Activated CD4-positive, alpha-beta T cell treated with anti-CD3 and anti-CD28 coated beads for 36 hours (primary cell): ENCODE measurements at regions of chr2 and their contacts with region 1.

Region 1: DNA sequence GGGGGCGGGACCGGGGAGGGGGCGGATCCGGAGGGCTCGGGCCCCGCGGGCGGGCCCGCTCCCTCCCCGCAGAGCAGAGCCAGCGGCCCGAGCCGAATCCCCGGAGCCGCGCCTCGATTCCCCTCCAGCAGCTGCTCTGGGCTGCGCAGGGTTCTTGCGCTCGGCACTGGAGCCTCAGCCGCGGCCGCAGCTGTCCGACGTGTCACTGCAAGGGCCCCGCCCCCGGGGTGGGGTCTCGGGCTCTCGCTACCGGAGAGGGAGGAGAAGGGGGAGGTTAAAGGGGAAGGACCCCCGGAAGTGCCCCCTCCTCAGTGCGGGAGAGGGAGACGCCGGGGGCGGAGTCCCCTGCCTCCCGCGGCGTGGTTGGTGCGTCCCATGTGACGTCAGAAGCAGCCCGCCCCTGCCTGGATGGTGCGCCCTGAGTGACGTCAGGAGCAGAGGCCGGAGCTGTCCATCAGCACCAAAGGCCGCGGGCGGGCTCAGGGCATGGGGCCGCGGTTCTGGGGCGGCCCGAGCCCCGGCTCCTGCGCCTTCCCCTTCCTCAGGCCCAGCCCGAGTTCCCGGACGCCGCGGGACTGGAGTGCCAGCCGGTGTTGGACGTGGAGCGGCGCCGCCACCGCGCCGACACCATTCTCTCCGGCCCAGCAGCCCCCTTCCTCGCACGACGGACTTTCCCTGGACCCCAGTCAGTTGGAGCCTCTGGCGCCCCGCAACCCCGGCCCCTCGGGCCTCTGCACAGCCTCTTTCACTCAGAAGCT is at the starts of genes CHPF and TMEM198:
- DNase-seq: peak; percentile 98
- ATAC-seq: peak; percentile 85
- H3K4me3 Mint-ChIP-seq: peak within 1 kb of the TSS; percentile 87
- H3K27ac Mint-ChIP-seq: peak within 1 kb of the TSS; percentile 66
- H3K4me1 Mint-ChIP-seq: peaks cover 22% of the 10 kb centered on the region
- H3K27me3 Mint-ChIP-seq: no peaks in the 10 kb centered on the region
- total RNA-seq, gene CHPF: 14.1 to 17.1 TPM
- total RNA-seq, gene TMEM198: 2.4 to 2.7 TPM

Region 2: DNA sequence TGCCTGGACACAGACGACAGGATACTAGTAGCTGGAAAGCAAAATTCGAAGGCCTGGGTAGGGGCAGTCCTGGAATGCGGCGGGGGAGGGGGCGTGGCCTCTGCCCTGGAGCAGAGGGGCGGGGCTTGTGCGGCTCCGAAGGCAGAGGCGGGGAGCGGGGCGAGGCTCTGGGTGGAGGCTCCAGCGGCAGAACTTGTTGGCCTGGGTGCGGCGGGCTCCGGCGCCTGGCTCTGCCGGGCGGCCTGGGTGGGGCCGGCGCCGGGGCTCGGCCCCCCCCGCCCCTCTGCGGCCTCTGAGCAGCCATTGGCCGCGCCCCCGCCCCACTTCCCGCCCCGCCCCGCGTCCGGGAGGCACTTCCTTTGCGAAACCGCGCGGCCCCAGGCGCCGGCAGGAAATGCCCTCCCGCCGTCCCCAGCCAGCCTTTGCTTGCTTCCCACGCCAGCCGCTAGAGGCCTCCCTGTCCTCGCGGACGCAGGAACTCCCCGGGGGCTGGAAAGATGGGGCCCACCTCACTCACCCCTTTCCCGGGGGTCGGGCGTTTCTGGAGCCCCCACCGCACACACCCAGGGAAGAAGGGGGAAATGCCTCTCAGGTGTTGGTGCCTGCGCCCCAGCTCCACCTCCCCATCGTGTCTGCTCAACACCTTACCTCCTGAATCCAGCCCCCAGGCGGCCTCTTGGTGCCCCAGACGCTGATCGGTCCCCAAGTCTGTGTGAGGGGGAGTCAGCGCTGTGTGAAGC is 1137.4 kb before region 1 on chr2:
- CTCF ChIA-PET with region 1: no interaction called
- POLR2A ChIA-PET with region 1: no interaction called
- intact Hi-C with region 1: loop called in 1 of 2 experiments (anchors 10 kb)
- DNase-seq: peak; percentile 97
- ATAC-seq: peak; percentile 88
- H3K4me3 Mint-ChIP-seq: peak overlapping the region; percentile 75
- H3K27ac Mint-ChIP-seq: peak overlapping the region; percentile 90
- H3K4me1 Mint-ChIP-seq: peaks cover 38% of the 10 kb centered on the region
- H3K27me3 Mint-ChIP-seq: peaks cover 5% of the 10 kb centered on the region

Region 3: DNA sequence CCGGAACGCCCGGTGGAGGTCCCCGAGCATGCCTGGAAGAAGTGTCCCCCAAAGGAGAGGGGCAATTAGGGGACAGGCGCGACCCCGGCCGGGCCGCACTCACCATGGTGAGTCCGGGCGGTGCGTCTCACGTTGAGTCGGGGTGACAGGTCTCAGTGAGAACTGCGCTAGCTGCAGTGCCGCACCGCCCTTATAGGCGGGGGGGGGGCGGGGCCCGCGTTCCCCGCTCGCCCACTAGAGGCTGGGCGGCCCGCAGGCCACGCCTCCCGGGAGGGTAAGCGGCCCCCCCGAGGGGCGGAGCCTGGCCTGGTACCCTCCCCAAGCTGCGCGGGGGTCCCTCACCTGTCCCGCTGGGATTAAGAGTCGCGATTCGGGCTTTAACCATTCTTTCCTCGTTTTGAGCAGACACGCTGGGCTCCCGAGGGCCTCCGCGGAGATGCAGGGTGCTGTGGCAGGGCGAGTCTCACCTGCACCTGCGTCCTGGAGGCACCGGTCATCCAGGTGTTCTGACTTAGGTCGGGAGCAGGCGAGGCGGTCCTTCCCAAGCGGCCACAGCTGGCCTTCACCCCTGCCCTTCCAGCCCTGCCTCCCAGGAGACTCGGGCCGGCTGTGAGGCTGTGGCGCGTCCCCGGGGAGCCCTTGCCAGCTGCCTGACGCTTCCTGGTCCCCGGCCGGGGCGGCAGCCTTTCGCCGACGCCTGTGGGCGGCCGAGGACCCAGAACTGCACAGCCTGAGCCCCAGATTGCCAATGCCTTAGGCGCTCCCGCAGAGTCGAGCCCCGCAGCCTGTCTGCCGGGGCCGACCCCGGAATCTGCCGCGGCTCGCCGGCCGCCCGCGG is 289.8 kb before region 1 on chr2 and contains the start of gene TUBA4A:
- CTCF ChIA-PET with region 1: no interaction called
- POLR2A ChIA-PET with region 1: no interaction called
- intact Hi-C with region 1: loop called in 1 of 2 experiments (anchors 10 kb)
- DNase-seq: peak; percentile 94
- ATAC-seq: peak; percentile 63
- H3K4me3 Mint-ChIP-seq: peak within 1 kb of the TSS; percentile 89
- H3K27ac Mint-ChIP-seq: peak within 1 kb of the TSS; percentile 93
- H3K4me1 Mint-ChIP-seq: peaks cover 54% of the 10 kb centered on the region
- H3K27me3 Mint-ChIP-seq: no peaks in the 10 kb centered on the region
- total RNA-seq, gene TUBA4A: 210 to 369 TPM

Region 4: GRCh38 chr2:219530048-219530963 is 13.5 kb before region 1 on chr2:
- CTCF ChIA-PET with region 1: interaction called, 55 read pairs
- POLR2A ChIA-PET with region 1: no interaction called
- intact Hi-C with region 1: no loop called
- DNase-seq: peak; percentile 93
- ATAC-seq: peak; percentile 97
- H3K4me3 Mint-ChIP-seq: no peak overlapping the region
- H3K27ac Mint-ChIP-seq: no peak overlapping the region
- H3K4me1 Mint-ChIP-seq: no peaks in the 10 kb centered on the region
- H3K27me3 Mint-ChIP-seq: peaks cover 49% of the 10 kb centered on the region

Region 5: DNA sequence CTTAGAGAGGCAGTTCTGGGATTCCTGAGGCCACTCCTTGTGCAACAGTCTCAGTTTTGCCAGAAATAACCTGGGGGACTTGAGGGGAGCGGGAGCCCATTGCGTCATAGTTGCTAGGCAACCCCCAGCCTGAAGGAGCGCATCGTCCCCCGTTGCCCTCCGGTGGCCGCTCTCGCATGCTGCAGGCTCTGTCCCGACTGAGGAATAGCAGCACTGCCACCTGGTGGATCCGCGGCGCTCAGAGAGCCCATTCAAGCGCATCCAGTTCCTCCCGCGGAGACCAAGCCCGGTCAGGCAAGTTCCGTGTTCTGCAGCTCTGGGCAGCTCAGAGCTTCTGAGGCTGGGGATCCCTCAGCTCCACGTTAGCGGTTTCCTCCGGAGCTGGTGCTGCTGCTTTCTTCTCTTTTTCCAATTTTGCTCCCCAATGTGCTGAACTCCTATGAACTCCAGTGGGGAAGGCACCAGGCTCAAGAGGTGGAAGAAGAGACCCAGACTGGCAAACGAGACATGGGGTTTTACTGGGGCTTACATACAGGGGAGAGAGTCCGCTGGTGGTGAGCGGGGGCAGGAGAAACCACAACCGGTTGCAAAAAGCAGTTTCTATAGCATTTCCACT is 98.8 kb after region 1 on chr2:
- CTCF ChIA-PET with region 1: interaction called, 22 read pairs
- POLR2A ChIA-PET with region 1: no interaction called
- intact Hi-C with region 1: loop called (anchors 1 kb)
- DNase-seq: peak; percentile 96
- ATAC-seq: peak; percentile 100
- H3K4me3 Mint-ChIP-seq: no peak overlapping the region
- H3K27ac Mint-ChIP-seq: no peak overlapping the region
- H3K4me1 Mint-ChIP-seq: peaks cover 8% of the 10 kb centered on the region
- H3K27me3 Mint-ChIP-seq: peaks cover 6% of the 10 kb centered on the region